IMR-90 (cell line): ENCODE measurements at regions of chr2 and their contacts with region 1.

Region 1: GRCh38 chr2:230798769-230799399 is 65.9 kb upstream of the ITM2C start:
- DNase-seq: peak; percentile 62
- ATAC-seq: peak; percentile 43
- H3K4me3 ChIP-seq: no peak overlapping the region
- H3K27ac ChIP-seq: no peak overlapping the region
- H3K4me1 ChIP-seq: peaks cover 22% of the 10 kb centered on the region
- H3K27me3 ChIP-seq: no peaks in the 10 kb centered on the region
- CTCF ChIP-seq: peak; percentile 72
- POLR2A ChIP-seq: no peak
- RAD21 ChIP-seq: peak; percentile 88

Region 2: GRCh38 chr2:230007931-230008707 is 790.8 kb before region 1 on chr2:
- CTCF ChIA-PET with region 1: no interaction called
- POLR2A ChIA-PET with region 1: no interaction called
- dilution Hi-C with region 1: no loop called
- in situ Hi-C with region 1: loop called (anchors 25 kb)
- intact Hi-C with region 1: loop called (anchors 5 kb)
- DNase-seq: peak; percentile 71
- ATAC-seq: peak; percentile 52
- H3K4me3 ChIP-seq: no peak overlapping the region
- H3K27ac ChIP-seq: no peak overlapping the region
- H3K4me1 ChIP-seq: peaks cover 15% of the 10 kb centered on the region
- H3K27me3 ChIP-seq: no peaks in the 10 kb centered on the region
- CTCF ChIP-seq: peak; percentile 88
- POLR2A ChIP-seq: peak; percentile 34; the same call in 1 of the 2 replicates
- RAD21 ChIP-seq: peak; percentile 88

Region 3: DNA sequence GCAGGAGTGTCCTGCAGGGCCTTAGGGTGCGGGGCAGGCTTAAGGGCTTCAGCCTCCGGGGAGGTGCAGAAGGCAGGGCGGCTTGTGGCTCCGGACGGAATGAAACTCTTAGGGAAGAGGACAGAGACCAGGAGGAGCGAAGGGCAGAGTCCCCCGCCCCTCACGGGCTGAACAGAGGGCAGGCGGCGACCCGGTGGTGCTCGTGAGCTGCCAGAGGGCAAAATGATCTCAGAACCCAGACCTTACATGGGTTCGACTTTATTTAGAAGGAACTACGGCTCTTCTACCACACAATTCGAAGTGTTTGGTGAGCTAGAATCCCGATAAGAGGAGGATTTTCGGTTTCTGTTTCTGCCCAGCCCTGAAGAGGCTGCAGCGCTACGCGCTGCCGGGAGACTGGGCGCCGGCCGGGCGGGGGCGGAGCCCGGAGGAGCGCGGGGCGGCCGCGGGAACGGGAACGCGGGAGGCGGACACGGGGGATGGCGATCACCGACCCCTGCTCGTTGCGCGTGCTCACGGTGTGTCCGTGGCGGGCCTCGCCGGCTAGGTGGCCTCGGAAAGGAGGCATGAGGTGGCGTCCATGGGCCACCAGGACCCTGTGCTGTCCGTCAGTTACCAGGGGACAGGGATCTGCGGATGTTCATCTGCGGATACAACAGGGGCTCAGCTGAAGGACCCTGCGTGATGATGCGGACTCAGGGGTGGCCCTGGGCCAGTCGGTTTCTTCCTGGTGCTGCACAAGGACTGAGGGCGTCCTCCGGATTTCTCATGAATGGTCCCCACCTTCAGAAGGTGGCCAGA is 387.1 kb before region 1 on chr2:
- CTCF ChIA-PET with region 1: no interaction called
- POLR2A ChIA-PET with region 1: no interaction called
- dilution Hi-C with region 1: no loop called
- in situ Hi-C with region 1: loop called (anchors 25 kb)
- intact Hi-C with region 1: loop called (anchors 5 kb)
- DNase-seq: peak; percentile 64
- ATAC-seq: peak; percentile 86
- H3K4me3 ChIP-seq: peak overlapping the region; percentile 72
- H3K27ac ChIP-seq: peak overlapping the region; percentile 92
- H3K4me1 ChIP-seq: peaks cover 13% of the 10 kb centered on the region
- H3K27me3 ChIP-seq: no peaks in the 10 kb centered on the region
- CTCF ChIP-seq: no peak; the same call in 1 of the 2 replicates
- POLR2A ChIP-seq: peak; percentile 56; the same call in 1 of the 2 replicates
- RAD21 ChIP-seq: no peak

Region 4: DNA sequence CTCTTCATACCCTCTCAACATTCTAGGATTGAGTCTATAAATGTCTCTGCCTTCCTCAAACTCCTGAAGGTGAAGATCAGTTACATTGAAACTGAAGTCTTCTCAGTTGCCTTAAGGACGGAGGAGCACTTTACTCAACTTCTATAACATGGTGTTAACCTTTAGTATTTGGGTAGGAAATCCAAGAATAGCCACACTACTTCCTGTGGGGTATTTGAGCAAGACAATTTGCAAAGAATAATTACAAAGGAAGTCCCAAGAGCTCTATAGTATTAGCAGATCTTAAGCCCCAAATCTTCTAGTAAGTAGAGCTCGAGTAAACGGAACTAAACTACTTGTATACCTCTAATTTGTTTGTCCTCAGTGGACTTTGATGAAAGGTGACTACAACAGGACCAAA is 302.0 kb before region 1 on chr2:
- CTCF ChIA-PET with region 1: interaction called, 3 read pairs
- POLR2A ChIA-PET with region 1: no interaction called
- dilution Hi-C with region 1: no loop called
- in situ Hi-C with region 1: no loop called
- intact Hi-C with region 1: loop called (anchors 5 kb)
- DNase-seq: no peak
- ATAC-seq: no peak
- H3K4me3 ChIP-seq: no peak overlapping the region
- H3K27ac ChIP-seq: no peak overlapping the region
- H3K4me1 ChIP-seq: no peaks in the 10 kb centered on the region
- H3K27me3 ChIP-seq: no peaks in the 10 kb centered on the region
- CTCF ChIP-seq: no peak
- POLR2A ChIP-seq: no peak
- RAD21 ChIP-seq: no peak

Region 5: GRCh38 chr2:230631470-230631869 is 167.4 kb before region 1 on chr2:
- CTCF ChIA-PET with region 1: no interaction called
- POLR2A ChIA-PET with region 1: no interaction called
- dilution Hi-C with region 1: no loop called
- in situ Hi-C with region 1: no loop called
- intact Hi-C with region 1: loop called (anchors 5 kb)
- DNase-seq: no peak
- ATAC-seq: no peak
- H3K4me3 ChIP-seq: no peak overlapping the region
- H3K27ac ChIP-seq: no peak overlapping the region
- H3K4me1 ChIP-seq: no peaks in the 10 kb centered on the region
- H3K27me3 ChIP-seq: no peaks in the 10 kb centered on the region
- CTCF ChIP-seq: no peak
- POLR2A ChIP-seq: no peak
- RAD21 ChIP-seq: no peak

Region 6: DNA sequence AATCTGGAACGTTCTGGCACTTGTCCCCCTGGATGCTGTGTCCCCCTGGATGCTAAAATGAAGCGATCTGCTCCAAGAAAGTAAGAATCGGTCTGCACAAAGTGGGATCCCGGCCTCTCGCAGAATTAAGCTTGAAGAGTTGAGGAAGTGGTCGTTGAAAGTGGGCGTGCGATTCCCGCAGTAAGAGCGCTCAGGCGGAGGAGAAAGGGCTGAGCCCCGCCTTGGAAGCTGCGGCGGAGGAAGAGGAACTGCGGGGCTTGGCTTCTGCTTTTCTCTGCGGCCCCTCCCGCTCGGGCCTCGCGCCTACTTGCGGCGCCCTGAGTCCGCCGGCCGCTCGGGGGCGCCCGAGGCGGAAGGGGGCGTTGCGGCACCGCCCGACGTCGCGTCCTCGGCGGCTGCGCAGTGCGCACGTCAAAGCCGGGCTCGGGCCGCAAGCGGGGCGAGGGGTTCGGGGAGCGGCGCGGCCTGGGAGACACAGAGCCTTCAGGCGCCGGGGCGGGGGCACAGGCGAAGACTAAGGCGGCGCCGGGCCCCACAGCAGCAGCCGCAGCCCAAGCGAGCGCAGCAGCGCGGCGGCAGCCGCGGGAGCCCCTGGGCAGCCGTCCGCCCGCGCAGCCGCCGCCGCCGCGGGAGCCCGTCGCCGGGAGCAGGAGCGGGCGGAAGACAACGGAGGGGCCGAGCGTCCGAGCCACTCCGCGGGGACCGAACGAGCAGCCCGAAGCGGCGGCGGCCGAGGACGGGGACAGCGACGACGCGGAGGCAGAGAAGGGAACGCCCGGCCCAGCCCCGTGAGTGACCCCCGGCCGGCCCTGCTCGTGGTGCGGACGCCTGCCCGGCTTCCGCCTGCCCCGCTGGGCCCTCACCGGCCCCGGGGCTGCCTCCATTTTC is 86.2 kb before region 1 on chr2 and contains the start of gene CAB39:
- CTCF ChIA-PET with region 1: interaction called, 11 read pairs
- POLR2A ChIA-PET with region 1: interaction called, 7 read pairs
- dilution Hi-C with region 1: no loop called
- in situ Hi-C with region 1: no loop called
- intact Hi-C with region 1: loop called (anchors 1 kb)
- DNase-seq: peak; percentile 86
- ATAC-seq: peak; percentile 93
- H3K4me3 ChIP-seq: peak within 1 kb of the TSS; percentile 65
- H3K27ac ChIP-seq: peak within 1 kb of the TSS; percentile 91
- H3K4me1 ChIP-seq: peaks cover 10% of the 10 kb centered on the region
- H3K27me3 ChIP-seq: no peaks in the 10 kb centered on the region; the same call in 1 of the 2 replicates
- CTCF ChIP-seq: peak; percentile 97
- POLR2A ChIP-seq: peak; percentile 87
- RAD21 ChIP-seq: peak; percentile 61
- total RNA-seq, gene CAB39: 71.7 and 95.3 TPM in 2 replicates

Region 7: DNA sequence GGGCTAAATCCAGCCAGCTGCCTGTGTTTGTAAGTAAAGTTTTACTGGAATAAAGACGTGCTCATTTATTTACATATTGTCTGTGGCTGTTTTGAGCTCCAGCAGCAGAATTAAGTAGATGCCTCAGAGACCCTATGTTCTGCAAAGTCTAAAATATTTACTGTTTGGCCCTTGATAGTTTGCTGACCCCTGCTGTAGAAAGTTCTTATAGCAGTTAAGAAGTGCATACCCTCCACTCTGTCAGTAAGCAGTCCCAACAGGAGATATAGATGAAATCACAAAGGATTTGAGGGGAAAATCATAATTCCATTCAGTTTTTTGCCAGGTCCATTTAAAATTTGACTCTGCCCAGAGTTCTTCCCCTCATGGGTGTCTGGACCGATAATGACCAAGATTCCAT is 15.7 kb after region 1 on chr2:
- CTCF ChIA-PET with region 1: interaction called, 11 read pairs
- POLR2A ChIA-PET with region 1: no interaction called
- dilution Hi-C with region 1: no loop called
- in situ Hi-C with region 1: no loop called
- intact Hi-C with region 1: no loop called
- DNase-seq: peak; percentile 47
- ATAC-seq: peak; percentile 76
- H3K4me3 ChIP-seq: no peak overlapping the region
- H3K27ac ChIP-seq: no peak overlapping the region
- H3K4me1 ChIP-seq: peaks cover 6% of the 10 kb centered on the region
- H3K27me3 ChIP-seq: no peaks in the 10 kb centered on the region
- CTCF ChIP-seq: peak; percentile 54
- POLR2A ChIP-seq: no peak
- RAD21 ChIP-seq: peak; percentile 65